ENCODE measurements at regions of chr10 and their contacts with region 1.

Region 1: GRCh38 chr10:62008946-62009345 is 107.4 kb downstream of the ARID5B start:
- DNase-seq: no peak
- H3K4me3 Mint-ChIP-seq: no peak overlapping the region
- H3K27ac Mint-ChIP-seq: no peak overlapping the region
- H3K4me1 Mint-ChIP-seq: peaks cover 43% of the 10 kb centered on the region
- H3K27me3 Mint-ChIP-seq: no peaks in the 10 kb centered on the region

Region 2: DNA sequence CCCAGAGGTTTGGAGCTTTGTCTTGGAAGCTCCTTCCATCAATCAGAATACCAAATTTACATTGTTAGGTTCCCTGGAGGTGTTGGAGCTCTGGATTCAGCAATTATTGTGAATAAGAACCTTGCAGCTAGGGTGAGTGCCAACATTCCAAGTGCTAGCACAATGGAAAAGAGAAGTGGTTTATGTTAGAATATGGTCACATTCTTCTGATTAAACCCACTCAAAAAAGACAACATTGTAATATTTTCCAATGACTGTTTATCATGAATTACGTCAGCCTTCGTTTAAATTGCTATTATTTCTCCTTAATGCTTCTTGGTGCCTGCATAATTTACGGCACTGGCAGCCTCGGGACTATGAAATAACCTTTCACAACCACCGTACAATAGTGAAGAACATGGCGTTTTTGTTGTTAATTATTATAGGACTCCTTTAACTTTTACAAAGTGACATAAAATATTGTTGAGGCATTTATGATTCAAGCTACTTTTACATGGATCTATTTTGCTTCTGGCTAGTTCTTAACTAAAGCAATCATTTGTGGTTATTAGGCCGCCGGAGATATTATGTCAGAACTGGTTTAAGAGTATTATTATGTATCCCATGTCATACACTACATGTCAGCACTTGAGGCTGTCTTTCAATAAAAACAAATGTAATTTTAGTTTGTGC is 10.2 kb after region 1 on chr10:
- CTCF ChIA-PET with region 1: interaction called, 3 read pairs
- POLR2A ChIA-PET with region 1: interaction called, 11 read pairs
- DNase-seq: no peak
- H3K4me3 Mint-ChIP-seq: no peak overlapping the region
- H3K27ac Mint-ChIP-seq: peak overlapping the region; percentile 71
- H3K4me1 Mint-ChIP-seq: peaks cover 77% of the 10 kb centered on the region
- H3K27me3 Mint-ChIP-seq: no peaks in the 10 kb centered on the region